A673 (cell line): ENCODE measurements at regions of chr19 and their contacts with region 1.

Region 1: DNA sequence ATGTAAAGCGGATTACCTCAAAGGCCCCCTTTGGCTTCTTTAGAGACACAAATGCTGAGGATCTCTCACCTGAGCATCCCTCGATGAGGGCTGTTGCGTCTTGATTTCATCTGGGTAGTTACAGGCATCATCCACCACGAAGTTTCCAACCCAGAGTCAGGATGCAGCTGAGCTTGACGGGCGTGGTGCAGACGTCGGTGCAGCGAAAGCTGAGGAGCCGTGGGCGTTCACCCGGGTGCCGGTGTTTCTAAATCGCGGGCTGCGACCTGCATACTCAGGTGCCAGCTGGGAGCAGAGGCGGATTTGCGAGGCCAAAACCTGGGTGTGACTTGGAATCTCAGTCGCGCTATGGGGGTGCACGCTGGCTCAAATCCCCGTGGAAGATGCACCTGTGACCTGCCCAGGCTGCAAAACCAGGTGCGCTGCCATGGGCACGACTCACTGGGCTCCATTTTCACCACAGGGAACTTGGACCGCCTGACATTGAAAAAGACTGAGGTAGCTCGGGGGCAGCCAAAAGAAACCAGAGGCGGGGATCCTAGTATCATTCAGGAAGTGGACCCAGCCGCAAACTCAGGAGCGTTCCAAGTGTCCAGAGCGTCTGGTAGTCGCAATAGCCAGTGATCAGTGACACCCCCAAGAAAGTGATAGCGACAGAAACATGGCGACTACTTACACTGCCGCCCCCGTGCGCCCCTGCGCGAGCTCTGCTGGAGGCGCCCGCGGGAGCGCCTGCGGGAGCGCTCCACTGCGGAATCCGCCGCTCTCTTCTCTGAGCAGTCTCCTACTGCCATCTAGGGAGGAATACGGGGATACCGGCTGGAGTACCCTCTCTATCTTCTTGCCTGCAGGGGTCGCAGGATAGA is 36.4 kb upstream of the IGFL4 start:
- DNase-seq: peak; percentile 94
- H3K4me3 ChIP-seq: peak overlapping the region; percentile 57
- H3K27ac ChIP-seq: no peak overlapping the region
- H3K4me1 ChIP-seq: peaks cover 22% of the 10 kb centered on the region
- H3K27me3 ChIP-seq: peaks cover 39% of the 10 kb centered on the region
- CTCF ChIP-seq: peak; percentile 99

Region 2: DNA sequence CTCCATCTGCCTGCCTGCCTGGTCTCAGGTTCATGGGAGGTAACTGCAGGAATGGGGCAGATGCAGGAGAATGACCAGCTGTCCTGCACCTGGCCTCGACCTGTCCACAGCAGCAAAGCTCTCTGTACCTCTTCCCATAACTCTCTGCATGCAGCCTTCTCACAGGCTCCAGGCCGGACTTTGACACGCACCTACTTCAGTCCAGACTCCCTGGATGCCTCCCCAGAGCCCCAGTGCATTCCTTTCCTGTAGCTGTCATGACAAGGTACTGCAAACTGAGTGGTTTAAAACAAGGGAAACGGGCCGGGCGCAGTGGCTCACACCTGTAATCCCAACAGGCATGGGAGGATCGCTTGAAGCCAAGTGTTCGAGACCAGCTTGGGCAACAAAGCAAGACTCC is 165.9 kb before region 1 on chr19:
- CTCF ChIA-PET with region 1: no interaction called
- POLR2A ChIA-PET with region 1: no interaction called
- intact Hi-C with region 1: no loop called
- DNase-seq: no peak
- H3K4me3 ChIP-seq: no peak overlapping the region
- H3K27ac ChIP-seq: no peak overlapping the region
- H3K4me1 ChIP-seq: no peaks in the 10 kb centered on the region
- H3K27me3 ChIP-seq: no peaks in the 10 kb centered on the region
- CTCF ChIP-seq: no peak

Region 3: DNA sequence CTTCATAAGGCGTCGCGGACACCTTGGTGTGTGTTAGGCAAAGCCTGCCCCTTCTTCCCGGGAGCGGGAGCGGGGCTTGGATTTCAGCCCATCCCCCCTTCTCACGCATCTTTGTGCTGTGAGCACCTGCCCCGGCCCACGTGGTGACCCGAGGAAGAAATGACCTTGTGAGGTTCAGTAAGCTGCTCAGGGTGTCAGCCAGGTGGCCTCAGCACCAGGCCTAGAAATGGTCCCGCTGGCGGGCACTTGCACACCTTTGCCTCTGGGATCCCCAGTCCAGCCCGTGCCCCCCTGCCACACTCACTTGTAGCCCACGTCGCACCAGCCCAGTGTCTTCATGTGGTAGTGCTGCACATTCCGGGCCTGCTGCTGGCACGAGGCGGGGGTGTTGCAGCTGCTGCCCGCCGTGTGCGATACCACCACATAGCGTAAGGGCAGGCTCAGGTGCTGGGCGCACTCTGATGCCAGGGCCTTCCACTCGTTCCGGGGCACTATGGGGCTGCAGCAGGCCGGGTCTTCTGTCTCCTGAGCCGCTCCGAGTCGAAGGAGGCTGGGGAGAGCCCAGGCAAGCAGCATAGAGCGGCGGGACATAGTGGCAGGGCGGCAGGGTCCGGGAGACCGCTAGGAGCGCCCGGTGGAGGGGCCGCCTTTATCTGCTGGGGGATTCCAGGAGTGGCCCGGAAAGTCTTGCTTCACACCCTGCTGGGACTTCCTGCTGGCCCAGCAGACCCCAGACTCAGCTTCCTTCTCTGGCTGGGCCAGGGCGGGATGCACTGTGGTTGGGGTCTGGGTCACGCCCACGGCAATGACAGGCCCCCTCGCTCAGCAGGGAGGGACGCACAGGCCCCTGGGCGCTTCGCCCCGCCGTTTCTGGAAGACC is 54.5 kb before region 1 on chr19 and contains the start of gene PGLYRP1:
- CTCF ChIA-PET with region 1: interaction called, 43 read pairs
- POLR2A ChIA-PET with region 1: no interaction called
- intact Hi-C with region 1: no loop called
- DNase-seq: no peak
- H3K4me3 ChIP-seq: no peak within 1 kb of the TSS
- H3K27ac ChIP-seq: no peak within 1 kb of the TSS
- H3K4me1 ChIP-seq: no peaks in the 10 kb centered on the region
- H3K27me3 ChIP-seq: peaks cover 3% of the 10 kb centered on the region
- CTCF ChIP-seq: no peak
- total RNA-seq, gene PGLYRP1: not detected in 2 replicates

Region 4: GRCh38 chr19:46030812-46031550 is 46.2 kb before region 1 on chr19:
- CTCF ChIA-PET with region 1: interaction called, 43 read pairs
- POLR2A ChIA-PET with region 1: no interaction called
- intact Hi-C with region 1: loop called (anchors 1 kb)
- DNase-seq: no peak
- H3K4me3 ChIP-seq: no peak overlapping the region
- H3K27ac ChIP-seq: no peak overlapping the region
- H3K4me1 ChIP-seq: no peaks in the 10 kb centered on the region
- H3K27me3 ChIP-seq: no peaks in the 10 kb centered on the region
- CTCF ChIP-seq: no peak

Region 5: GRCh38 chr19:46192992-46193650 is 115.9 kb after region 1 on chr19:
- CTCF ChIA-PET with region 1: interaction called, 6 read pairs
- POLR2A ChIA-PET with region 1: no interaction called
- intact Hi-C with region 1: loop called (anchors 1 kb)
- DNase-seq: peak; percentile 68
- H3K4me3 ChIP-seq: no peak overlapping the region
- H3K27ac ChIP-seq: no peak overlapping the region
- H3K4me1 ChIP-seq: no peaks in the 10 kb centered on the region
- H3K27me3 ChIP-seq: no peaks in the 10 kb centered on the region
- CTCF ChIP-seq: no peak

Region 6: DNA sequence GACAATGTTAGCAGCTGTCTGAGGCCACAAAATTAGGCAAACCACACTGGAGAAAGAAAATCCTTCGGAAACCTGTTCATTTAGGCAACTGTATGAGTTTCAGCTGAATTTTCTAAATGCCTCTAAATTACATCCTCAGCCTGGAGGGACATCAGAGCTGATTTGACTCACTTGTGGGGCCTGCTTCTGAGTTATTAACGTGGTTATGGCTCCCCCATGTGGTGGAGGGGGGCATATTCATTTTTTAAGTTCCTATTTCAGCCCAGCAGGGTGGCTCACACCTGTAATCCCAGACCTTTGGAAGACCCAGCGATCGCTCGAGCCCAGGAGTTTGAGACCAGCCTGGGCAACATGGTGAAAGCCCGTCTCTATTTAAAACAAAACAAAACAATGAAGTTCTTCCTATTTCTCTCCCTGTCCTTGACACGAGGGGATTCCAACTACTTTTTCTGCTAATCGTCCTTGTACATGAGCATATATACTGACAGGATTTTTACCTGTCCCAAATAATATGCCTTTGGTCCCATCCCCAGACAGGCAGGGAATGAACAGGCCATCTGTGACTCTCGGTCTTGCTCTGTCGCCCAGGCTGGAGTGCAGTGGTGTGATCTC is 188.1 kb after region 1 on chr19:
- CTCF ChIA-PET with region 1: interaction called, 32 read pairs
- POLR2A ChIA-PET with region 1: no interaction called
- intact Hi-C with region 1: loop called (anchors 1 kb)
- DNase-seq: peak; percentile 86
- H3K4me3 ChIP-seq: no peak overlapping the region
- H3K27ac ChIP-seq: no peak overlapping the region
- H3K4me1 ChIP-seq: no peaks in the 10 kb centered on the region
- H3K27me3 ChIP-seq: no peaks in the 10 kb centered on the region
- CTCF ChIP-seq: peak; percentile 81

Region 7: DNA sequence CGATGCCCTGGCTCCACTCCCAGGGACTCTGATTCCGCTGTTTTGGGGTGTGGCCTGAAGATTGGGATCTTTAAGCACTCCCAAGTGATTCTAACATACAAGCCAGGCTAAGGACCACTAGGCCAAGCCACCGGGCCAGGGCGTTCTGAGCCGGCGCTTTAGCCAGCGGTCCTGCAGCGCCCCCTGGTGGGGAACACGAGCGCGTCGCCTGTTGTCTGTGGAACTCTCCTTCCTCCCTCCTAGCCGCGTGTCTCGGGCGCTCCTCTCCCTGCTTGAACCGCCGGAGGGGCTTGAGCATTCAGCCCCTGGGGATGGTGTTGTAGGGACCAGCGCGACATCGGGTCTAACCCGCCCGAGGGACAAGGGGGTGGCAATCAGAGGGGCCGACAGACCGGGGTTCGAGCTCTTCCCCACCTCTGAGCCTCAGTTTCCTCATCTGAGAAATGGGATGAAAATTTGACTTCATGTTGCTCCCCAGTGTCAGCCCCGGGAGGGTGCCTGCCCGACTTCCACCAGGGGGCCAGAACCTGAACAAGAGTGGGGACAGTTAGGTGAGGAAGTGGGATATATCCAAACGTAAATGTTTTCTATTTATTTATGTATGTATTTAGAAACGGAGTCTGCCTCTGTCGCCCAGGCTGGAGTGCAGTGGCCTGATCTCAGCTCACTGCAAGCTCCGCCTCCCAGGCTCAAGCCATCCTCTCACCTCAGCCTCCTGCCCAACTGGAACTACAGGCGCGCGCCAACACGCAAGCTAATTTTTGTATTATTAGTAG is 436.5 kb after region 1 on chr19:
- CTCF ChIA-PET with region 1: no interaction called
- POLR2A ChIA-PET with region 1: no interaction called
- intact Hi-C with region 1: loop called (anchors 10 kb)
- DNase-seq: peak; percentile 86
- H3K4me3 ChIP-seq: no peak overlapping the region
- H3K27ac ChIP-seq: no peak overlapping the region
- H3K4me1 ChIP-seq: no peaks in the 10 kb centered on the region
- H3K27me3 ChIP-seq: no peaks in the 10 kb centered on the region
- CTCF ChIP-seq: peak; percentile 97